Activated CD4-positive, alpha-beta memory T cell treated with anti-CD3 and anti-CD28 coated beads for 36 hours (primary cell): ENCODE measurements at regions of chr9 and their contacts with region 1.

Region 1: GRCh38 chr9:32589083-32589723 is 16.2 kb upstream of the NDUFB6 start:
- DNase-seq: no peak
- H3K4me3 Mint-ChIP-seq: no peak overlapping the region
- H3K27ac Mint-ChIP-seq: no peak overlapping the region
- H3K4me1 Mint-ChIP-seq: no peaks in the 10 kb centered on the region
- H3K27me3 Mint-ChIP-seq: peaks cover 14% of the 10 kb centered on the region

Region 2: DNA sequence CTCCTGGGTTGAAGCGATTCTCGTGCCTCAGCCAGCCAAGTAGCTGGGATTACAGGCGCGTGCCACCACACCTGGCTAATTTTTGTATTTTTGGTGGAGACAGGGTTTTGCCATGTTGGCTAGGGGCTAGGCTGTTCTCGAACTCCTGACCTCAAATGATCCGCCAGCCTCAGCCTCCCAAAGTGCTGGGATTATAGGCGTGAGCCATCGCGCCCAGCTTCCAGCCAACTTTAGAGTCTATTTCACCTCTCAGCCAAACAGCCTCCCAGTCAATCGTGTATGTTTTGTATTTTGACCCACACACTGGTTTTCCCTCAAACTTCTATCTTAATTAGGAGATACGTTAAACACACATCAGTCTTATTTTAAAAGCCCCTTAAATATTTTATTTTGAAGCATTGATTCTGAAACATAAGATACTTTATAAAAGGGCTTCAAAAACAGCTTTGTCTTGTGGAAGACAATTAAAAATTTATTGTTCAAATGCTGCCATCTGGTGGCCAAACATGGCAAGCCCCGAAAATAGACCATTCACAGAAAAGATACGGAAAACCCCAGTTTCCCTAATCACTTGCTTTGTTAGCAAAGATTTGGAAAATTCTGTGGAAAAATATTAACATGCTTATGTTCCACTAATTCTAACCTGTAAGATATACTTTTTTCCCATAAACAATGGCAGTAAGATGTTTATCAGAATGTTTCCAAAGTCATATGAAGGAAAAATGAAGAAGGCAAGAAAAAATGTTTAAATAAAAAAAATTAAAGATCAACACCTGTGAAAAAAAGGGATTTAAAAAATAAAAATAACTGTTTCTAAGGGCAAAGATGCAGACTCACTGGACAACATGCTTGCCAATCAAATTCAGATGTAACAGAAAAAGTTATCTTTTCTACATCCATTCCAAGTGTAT is 379.2 kb after region 1 on chr9:
- CTCF ChIA-PET with region 1: interaction called, 39 read pairs
- POLR2A ChIA-PET with region 1: no interaction called
- intact Hi-C with region 1: loop called (anchors 1 kb)
- DNase-seq: peak; percentile 63
- H3K4me3 Mint-ChIP-seq: no peak overlapping the region
- H3K27ac Mint-ChIP-seq: no peak overlapping the region
- H3K4me1 Mint-ChIP-seq: peaks cover 2% of the 10 kb centered on the region
- H3K27me3 Mint-ChIP-seq: no peaks in the 10 kb centered on the region